Activated CD4-positive, alpha-beta memory T cell treated with anti-CD3 and anti-CD28 coated beads for 36 hours (primary cell): ENCODE measurements at regions of chr20 and their contacts with region 1.

Region 1: GRCh38 chr20:35146920-35147574 is at the start of gene EDEM2:
- DNase-seq: peak; percentile 97
- H3K4me3 Mint-ChIP-seq: peak within 1 kb of the TSS; percentile 93
- H3K27ac Mint-ChIP-seq: peak within 1 kb of the TSS; percentile 91
- H3K4me1 Mint-ChIP-seq: peaks cover 35% of the 10 kb centered on the region
- H3K27me3 Mint-ChIP-seq: no peaks in the 10 kb centered on the region
- total RNA-seq, gene EDEM2: 17.3 to 19.9 TPM

Region 2: GRCh38 chr20:35171753-35172433 is 24.8 kb after region 1 on chr20 and contains the start of gene PROCR:
- CTCF ChIA-PET with region 1: no interaction called
- POLR2A ChIA-PET with region 1: no interaction called
- intact Hi-C with region 1: no loop called
- DNase-seq: peak; percentile 18
- H3K4me3 Mint-ChIP-seq: peak within 1 kb of the TSS; percentile 50
- H3K27ac Mint-ChIP-seq: no peak within 1 kb of the TSS
- H3K4me1 Mint-ChIP-seq: peaks cover 13% of the 10 kb centered on the region
- H3K27me3 Mint-ChIP-seq: no peaks in the 10 kb centered on the region
- total RNA-seq, gene PROCR: 1.0 to 1.1 TPM

Region 3: GRCh38 chr20:35207950-35208611 is 61.0 kb after region 1 on chr20:
- CTCF ChIA-PET with region 1: interaction called, 22 read pairs
- POLR2A ChIA-PET with region 1: no interaction called
- intact Hi-C with region 1: loop called (anchors 1 kb)
- DNase-seq: peak; percentile 83
- H3K4me3 Mint-ChIP-seq: no peak overlapping the region
- H3K27ac Mint-ChIP-seq: no peak overlapping the region
- H3K4me1 Mint-ChIP-seq: no peaks in the 10 kb centered on the region
- H3K27me3 Mint-ChIP-seq: no peaks in the 10 kb centered on the region

Region 4: DNA sequence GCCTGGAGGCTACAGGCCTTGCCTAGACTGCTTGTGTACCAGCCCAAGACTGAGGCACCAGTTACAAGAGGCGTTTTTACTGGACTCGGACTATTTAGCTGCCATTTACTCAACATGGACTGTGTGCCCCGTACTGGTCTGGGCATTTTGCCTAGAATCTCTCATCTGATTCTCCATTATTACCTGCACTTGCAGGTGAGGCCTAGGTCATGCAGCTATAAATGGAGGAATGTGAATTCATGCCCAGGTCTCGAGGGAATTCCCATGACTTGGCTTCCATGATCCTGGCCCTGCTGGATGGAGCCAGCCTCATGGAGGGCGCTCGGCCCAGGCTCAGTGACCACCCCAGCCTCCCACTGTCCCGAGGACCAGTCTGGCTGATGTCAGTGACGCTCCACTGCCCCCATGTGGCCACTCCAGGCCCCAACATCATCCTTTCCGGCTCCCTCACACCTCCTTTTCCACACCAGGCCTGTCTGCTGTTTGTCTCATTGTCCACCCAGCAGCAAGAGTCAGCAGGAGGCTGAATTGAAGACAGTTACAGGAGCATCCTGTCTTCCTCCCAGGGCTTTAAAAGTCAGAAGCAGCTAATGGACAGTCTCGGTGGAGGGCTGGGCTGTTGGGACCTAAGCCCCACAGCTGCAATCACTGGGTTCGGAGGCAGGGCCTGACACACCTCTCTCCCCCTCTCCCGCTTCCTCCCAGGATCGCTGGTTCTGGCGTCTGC is 122.2 kb after region 1 on chr20:
- CTCF ChIA-PET with region 1: interaction called, 21 read pairs
- POLR2A ChIA-PET with region 1: no interaction called
- intact Hi-C with region 1: loop called (anchors 2 kb)
- DNase-seq: peak; percentile 65
- H3K4me3 Mint-ChIP-seq: no peak overlapping the region
- H3K27ac Mint-ChIP-seq: no peak overlapping the region
- H3K4me1 Mint-ChIP-seq: peaks cover 2% of the 10 kb centered on the region
- H3K27me3 Mint-ChIP-seq: no peaks in the 10 kb centered on the region

Region 5: DNA sequence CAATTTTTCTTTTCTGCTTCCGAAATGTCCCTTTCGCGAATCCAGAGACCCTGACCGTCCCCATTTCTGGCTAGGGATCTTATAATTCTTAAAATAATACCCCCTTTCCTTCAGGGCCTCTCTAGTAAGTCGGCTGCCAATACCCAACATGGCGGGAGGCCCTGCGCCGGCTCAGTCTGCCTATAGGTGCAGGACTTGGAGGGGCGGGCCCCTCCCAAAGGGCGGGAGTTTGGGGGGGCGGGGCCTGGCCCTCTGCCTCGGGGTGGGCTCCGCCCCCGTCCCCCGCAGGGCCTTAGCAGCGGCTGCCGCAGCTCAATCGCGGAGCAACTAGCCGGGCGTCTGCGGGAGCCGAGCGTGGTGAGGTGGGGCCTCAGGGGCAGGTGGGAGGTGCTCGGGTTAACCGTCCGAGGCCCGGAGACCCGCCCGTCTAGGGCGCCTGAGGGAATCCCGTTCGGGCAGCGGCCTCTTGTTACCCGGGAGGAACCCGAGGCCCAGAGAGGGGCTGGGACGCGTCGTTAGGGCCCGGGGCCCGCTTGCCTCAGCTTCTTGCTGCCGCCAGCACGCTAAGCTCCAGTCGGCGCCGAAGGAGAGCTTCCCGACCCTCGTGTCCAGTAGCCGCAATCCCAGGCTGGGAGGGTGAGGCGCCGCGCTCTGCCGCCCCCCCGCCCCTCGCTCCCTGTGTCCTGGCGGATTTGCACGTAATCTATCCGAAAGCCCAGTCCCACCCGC is 308.0 kb after region 1 on chr20 and contains the start of gene CEP250:
- CTCF ChIA-PET with region 1: no interaction called
- POLR2A ChIA-PET with region 1: interaction called, 5 read pairs
- intact Hi-C with region 1: loop called (anchors 5 kb)
- DNase-seq: peak; percentile 95
- H3K4me3 Mint-ChIP-seq: peak within 1 kb of the TSS; percentile 88
- H3K27ac Mint-ChIP-seq: peak within 1 kb of the TSS; percentile 97
- H3K4me1 Mint-ChIP-seq: peaks cover 28% of the 10 kb centered on the region
- H3K27me3 Mint-ChIP-seq: no peaks in the 10 kb centered on the region
- total RNA-seq, gene CEP250: 47.2 to 60.8 TPM